Kidney (tissue), 22 donors: ENCODE measurements at regions of chr11 and their contacts with region 1.

Region 1: DNA sequence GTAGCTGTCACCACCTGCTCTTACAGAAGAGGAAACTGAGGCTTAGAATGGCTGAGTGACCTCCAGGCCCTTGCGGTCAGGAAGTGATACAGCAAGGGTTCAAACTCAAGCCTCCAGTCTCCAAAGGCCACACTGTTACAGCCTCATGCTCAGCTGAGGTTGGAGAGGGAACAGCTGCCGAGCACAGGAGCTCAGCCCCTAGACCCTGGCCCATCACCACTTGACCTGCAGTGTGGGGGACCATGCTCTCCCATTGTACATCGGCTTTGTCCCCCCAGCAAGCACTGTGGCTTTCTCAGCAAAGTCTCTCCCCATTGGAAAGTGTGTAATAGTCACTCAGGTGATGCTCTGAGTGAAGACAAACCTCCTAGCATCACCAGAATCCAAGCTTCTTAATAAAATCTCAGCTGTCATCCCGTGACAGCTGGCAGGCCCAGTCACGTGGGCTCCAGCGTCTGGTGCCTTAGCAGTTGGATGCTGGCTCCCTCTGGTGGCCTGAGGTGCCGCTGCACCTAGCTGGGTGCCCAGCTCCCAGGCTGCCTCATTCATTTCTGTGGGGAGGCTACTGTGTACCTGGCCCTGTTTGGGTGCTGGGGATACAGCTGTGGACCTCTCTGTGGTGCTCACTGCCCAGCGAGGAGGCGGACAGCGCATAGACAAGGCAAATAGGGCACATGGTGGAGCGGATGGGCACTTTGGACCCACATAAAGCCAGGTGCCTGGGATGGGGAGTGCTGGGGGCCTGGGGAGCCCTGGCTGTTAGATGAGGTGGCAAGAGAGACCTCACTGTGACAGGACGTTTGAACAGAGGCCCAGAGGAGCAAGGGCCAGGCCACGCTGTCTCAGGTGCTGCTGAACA is 19.1 kb upstream of the MYRF start:
- DNase-seq: peak; percentile 82 to 94 (median 87)
- H3K4me3 ChIP-seq: no peak overlapping the region
- H3K27ac ChIP-seq: no peak overlapping the region
- H3K4me1 ChIP-seq: peaks cover 0 to 3% (median 0%) of the 10 kb centered on the region in 3 donors
- H3K27me3 ChIP-seq: no peaks in the 10 kb centered on the region
- CTCF ChIP-seq: peak; percentile 99

Region 2: DNA sequence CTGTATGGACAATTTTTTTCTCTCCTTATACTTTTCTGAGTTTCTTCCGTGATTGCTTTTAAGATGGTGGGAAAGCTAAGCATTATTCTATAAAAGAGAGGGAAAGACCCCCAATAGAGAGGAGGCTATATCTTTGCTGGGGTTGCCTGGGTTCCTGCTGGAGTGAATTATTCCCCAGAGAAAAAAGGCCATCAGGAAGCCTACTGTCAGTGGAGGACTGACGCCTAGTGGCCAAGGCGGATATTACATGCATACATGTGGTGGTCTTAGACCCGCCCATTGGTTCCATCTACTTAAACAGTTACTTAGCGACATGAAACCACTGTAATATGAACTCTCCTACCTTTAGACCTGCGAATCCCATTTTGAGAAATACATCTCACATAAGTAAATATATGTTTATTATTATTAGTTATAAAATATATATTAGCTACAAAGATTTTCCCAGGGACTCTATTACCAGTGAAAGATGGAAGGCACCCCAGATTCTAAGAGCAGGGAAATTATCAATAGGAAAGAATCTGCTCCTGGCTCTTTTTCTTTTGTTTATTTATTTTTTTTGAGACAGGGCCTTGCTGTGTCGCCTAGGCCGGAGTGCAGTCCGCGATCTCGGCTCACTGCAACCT is 545.7 kb before region 1 on chr11:
- intact Hi-C with region 1: no loop called
- DNase-seq: peak in 4 of 5 donors; percentile 91 to 95 (median 93)
- H3K4me3 ChIP-seq: no peak overlapping the region
- H3K27ac ChIP-seq: no peak overlapping the region
- H3K4me1 ChIP-seq: no peaks in the 10 kb centered on the region
- H3K27me3 ChIP-seq: no peaks in the 10 kb centered on the region
- CTCF ChIP-seq: peak; percentile 93

Region 3: DNA sequence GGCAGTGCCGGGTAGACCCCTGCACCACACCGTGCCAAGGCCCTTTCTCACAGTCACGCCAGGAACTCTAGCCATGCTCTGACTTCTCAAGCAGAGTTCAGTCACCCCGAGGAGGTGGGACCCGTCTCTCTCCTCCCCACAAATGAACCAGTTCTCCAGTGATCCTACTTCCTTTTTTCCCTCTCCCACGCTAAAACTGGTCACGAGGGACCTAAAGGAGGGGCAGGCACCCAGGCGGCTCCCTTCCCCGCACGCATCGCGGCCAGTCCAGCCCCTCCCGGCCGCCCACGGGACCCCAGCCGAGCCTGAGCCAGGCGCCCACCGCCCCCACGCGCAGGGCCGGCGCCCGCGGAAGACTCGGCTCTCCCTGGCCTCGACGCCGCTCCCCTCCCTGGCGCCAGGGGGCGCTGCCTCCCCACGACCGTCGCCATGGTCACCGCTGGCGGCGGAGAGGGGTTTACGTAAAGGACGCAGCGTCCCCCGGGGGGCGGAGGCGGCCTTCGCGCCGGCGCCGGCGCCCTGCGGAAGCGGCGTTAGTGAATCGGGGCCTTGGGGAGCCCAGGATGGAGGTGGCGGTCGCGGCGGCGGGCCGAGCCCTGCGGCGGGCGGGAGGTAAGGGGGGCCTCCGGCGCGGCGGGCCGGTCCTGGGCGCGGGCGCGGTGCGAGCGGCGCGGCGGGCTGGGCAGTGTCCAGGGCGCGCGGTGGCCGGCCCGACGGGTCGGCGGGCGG is 53.3 kb before region 1 on chr11 and contains the start of gene DAGLA:
- intact Hi-C with region 1: loop called (anchors 5 kb)
- DNase-seq: peak; percentile 65 to 89 (median 84)
- H3K4me3 ChIP-seq: peak within 1 kb of the TSS; percentile 34 to 66 (median 36)
- H3K27ac ChIP-seq: no peak within 1 kb of the TSS
- H3K4me1 ChIP-seq: peaks cover 0 to 35% (median 10%) of the 10 kb centered on the region in 3 donors
- H3K27me3 ChIP-seq: no peaks in the 10 kb centered on the region
- CTCF ChIP-seq: peak; percentile 95
- total RNA-seq, gene DAGLA: 3.9 TPM